Cardiac septum (tissue), 1 donor: ENCODE measurements at regions of chr18 and their contacts with region 1.

Region 1: GRCh38 chr18:13611601-13612195 is 114.7 kb downstream of the FAM210A start:
- DNase-seq: peak; percentile 86

Region 2: GRCh38 chr18:13369756-13370510 is 241.8 kb before region 1 on chr18:
- intact Hi-C with region 1: no loop called
- DNase-seq: peak; percentile 53

Region 3: DNA sequence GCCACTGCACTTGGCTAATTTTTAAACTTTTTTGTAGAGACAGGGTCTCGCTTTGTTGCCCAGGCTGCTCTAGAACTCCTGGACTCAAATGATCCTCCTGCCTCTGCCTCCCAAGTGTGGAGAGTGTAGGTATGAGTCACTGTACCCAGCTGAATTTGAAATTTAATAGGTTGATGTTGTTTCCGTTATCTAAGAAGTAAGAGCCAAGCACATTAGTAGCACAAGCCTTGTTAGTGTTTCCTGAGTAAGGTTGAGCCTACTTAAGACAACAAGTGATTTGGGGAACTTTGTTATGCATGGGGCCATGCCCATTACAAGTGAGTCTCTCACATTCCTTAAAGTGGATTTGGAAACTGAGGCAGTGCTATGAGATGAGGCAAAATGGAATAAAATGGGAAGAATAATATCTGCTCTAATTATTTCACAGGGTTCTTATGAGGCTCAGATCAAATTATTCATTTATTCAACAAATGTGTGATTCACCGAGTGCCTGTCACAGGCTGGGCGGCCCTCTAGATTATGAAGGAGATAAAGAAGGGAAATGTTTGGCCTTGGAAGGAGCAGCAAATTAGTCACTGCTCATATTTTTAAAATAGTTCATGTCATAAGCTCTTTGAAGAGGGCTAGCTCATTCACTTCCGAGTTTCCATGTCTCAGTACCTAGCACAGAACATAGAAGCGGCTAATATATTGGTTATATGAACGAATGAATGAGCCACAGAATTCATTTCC is 175.9 kb before region 1 on chr18:
- intact Hi-C with region 1: loop called (anchors 10 kb)
- DNase-seq: no peak

Region 4: GRCh38 chr18:13500227-13500865 is 111.4 kb before region 1 on chr18:
- intact Hi-C with region 1: no loop called
- DNase-seq: no peak

Region 5: DNA sequence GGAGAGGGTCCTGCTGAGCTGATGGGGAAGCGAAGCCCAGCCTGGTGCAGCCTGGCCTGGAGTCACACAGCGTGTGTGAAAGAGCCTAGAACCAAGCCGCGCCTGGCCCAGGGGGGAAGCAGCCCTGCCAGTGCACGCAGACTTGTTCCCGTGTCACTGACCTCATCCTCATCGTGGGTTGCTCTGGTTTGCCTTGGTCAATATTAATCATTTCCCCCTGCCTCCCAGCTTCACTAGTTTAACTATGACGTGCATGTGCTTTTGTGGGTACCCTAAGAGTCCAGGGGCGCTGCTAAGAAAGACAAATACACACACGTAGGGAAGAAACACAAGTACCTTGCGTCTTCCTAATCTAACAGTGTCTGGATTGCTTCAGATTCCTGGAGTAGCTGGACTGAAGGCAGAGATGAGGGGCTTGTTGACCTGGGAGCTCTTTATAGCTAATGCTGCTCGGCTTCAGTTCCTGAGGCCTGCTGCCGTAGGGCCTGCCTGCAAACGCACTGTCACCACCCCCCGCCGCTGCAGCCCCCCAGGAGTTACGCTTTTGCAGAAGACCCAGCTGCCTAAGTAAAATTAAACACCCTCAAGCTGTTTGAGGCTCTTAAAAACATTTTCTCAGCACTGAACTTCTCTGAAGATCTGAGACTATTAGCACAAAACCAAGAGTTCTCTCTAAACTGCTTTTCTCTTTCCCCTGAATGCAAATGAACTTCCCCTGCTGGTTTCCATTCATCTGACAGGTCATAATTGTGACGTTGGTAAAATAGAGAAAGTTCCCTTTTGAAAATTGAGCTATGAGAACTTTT is 44.6 kb before region 1 on chr18:
- intact Hi-C with region 1: loop called (anchors 2 kb)
- DNase-seq: no peak